GM12878 (cell line): ENCODE measurements at regions of chr1 and their contacts with region 1.

Region 1: GRCh38 chr1:90509225-90510048 is 207.7 kb downstream of the BARHL2 start:
- DNase-seq: peak; percentile 34
- ATAC-seq: peak; percentile 80
- H3K4me3 ChIP-seq: no peak overlapping the region
- H3K27ac ChIP-seq: no peak overlapping the region
- H3K4me1 ChIP-seq: no peaks in the 10 kb centered on the region
- H3K27me3 ChIP-seq: no peaks in the 10 kb centered on the region
- CTCF ChIP-seq: no peak
- EP300 ChIP-seq: peak; percentile 28 to 62; a peak in 2 of 4 replicates
- POLR2A ChIP-seq: no peak
- RAD21 ChIP-seq: no peak

Region 2: GRCh38 chr1:89771991-89772560 is 737.4 kb before region 1 on chr1:
- CTCF ChIA-PET with region 1: no interaction called
- POLR2A ChIA-PET with region 1: no interaction called
- RAD21 ChIA-PET with region 1: no interaction called
- SMC1A ChIA-PET with region 1: no interaction called
- in situ Hi-C with region 1: no loop called
- intact Hi-C with region 1: no loop called
- DNase-seq: no peak
- ATAC-seq: no peak
- H3K4me3 ChIP-seq: no peak overlapping the region
- H3K27ac ChIP-seq: no peak overlapping the region
- H3K4me1 ChIP-seq: no peaks in the 10 kb centered on the region
- H3K27me3 ChIP-seq: no peaks in the 10 kb centered on the region; a peak in 1 of 4 replicates
- CTCF ChIP-seq: no peak
- EP300 ChIP-seq: no peak
- POLR2A ChIP-seq: no peak
- RAD21 ChIP-seq: no peak

Region 3: GRCh38 chr1:90357995-90358394 is 151.4 kb before region 1 on chr1:
- CTCF ChIA-PET with region 1: no interaction called
- POLR2A ChIA-PET with region 1: no interaction called
- RAD21 ChIA-PET with region 1: interaction called, 10 read pairs
- SMC1A ChIA-PET with region 1: interaction called, 4 read pairs
- in situ Hi-C with region 1: no loop called
- intact Hi-C with region 1: loop called (anchors 5 kb)
- DNase-seq: peak; percentile 42
- ATAC-seq: peak; percentile 91
- H3K4me3 ChIP-seq: no peak overlapping the region
- H3K27ac ChIP-seq: no peak overlapping the region
- H3K4me1 ChIP-seq: no peaks in the 10 kb centered on the region; the same call in 1 of the 2 replicates
- H3K27me3 ChIP-seq: no peaks in the 10 kb centered on the region
- CTCF ChIP-seq: no peak
- EP300 ChIP-seq: peak; percentile 46 to 83; a peak in 3 of 4 replicates
- POLR2A ChIP-seq: no peak
- RAD21 ChIP-seq: no peak

Region 4: GRCh38 chr1:90488451-90488850 is 21.0 kb before region 1 on chr1:
- CTCF ChIA-PET with region 1: interaction called, 20 read pairs
- POLR2A ChIA-PET with region 1: interaction called, 22 read pairs
- RAD21 ChIA-PET with region 1: interaction called, 110 read pairs
- SMC1A ChIA-PET with region 1: interaction called, 78 read pairs
- in situ Hi-C with region 1: no loop called
- intact Hi-C with region 1: no loop called
- DNase-seq: no peak
- ATAC-seq: no peak
- H3K4me3 ChIP-seq: no peak overlapping the region
- H3K27ac ChIP-seq: no peak overlapping the region
- H3K4me1 ChIP-seq: no peaks in the 10 kb centered on the region
- H3K27me3 ChIP-seq: no peaks in the 10 kb centered on the region
- CTCF ChIP-seq: no peak
- EP300 ChIP-seq: no peak
- POLR2A ChIP-seq: no peak
- RAD21 ChIP-seq: no peak

Region 5: GRCh38 chr1:90526954-90527353 is 17.5 kb after region 1 on chr1:
- CTCF ChIA-PET with region 1: interaction called, 16 read pairs
- POLR2A ChIA-PET with region 1: interaction called, 54 read pairs
- RAD21 ChIA-PET with region 1: interaction called, 60 read pairs
- SMC1A ChIA-PET with region 1: interaction called, 111 read pairs
- in situ Hi-C with region 1: no loop called
- intact Hi-C with region 1: no loop called
- DNase-seq: no peak
- ATAC-seq: peak; percentile 57
- H3K4me3 ChIP-seq: no peak overlapping the region
- H3K27ac ChIP-seq: no peak overlapping the region
- H3K4me1 ChIP-seq: no peaks in the 10 kb centered on the region
- H3K27me3 ChIP-seq: no peaks in the 10 kb centered on the region
- CTCF ChIP-seq: no peak
- EP300 ChIP-seq: no peak
- POLR2A ChIP-seq: no peak
- RAD21 ChIP-seq: no peak

Region 6: GRCh38 chr1:90534663-90535295 is 25.3 kb after region 1 on chr1:
- CTCF ChIA-PET with region 1: interaction called, 17 read pairs
- POLR2A ChIA-PET with region 1: interaction called, 54 read pairs
- RAD21 ChIA-PET with region 1: interaction called, 60 read pairs
- SMC1A ChIA-PET with region 1: interaction called, 111 read pairs
- in situ Hi-C with region 1: no loop called
- intact Hi-C with region 1: loop called (anchors 1 kb)
- DNase-seq: no peak
- ATAC-seq: peak; percentile 64
- H3K4me3 ChIP-seq: no peak overlapping the region
- H3K27ac ChIP-seq: no peak overlapping the region
- H3K4me1 ChIP-seq: no peaks in the 10 kb centered on the region
- H3K27me3 ChIP-seq: peaks cover 0 to 3% of the 10 kb centered on the region in 2 experiments; a peak in 1 of 4 replicates
- CTCF ChIP-seq: no peak; a peak in 1 of 6 replicates
- EP300 ChIP-seq: 0 out of 4 replicates have a peak, but pooled peaks of 1 of the 2 experiments have one; percentile 28
- POLR2A ChIP-seq: no peak
- RAD21 ChIP-seq: no peak

Region 7: DNA sequence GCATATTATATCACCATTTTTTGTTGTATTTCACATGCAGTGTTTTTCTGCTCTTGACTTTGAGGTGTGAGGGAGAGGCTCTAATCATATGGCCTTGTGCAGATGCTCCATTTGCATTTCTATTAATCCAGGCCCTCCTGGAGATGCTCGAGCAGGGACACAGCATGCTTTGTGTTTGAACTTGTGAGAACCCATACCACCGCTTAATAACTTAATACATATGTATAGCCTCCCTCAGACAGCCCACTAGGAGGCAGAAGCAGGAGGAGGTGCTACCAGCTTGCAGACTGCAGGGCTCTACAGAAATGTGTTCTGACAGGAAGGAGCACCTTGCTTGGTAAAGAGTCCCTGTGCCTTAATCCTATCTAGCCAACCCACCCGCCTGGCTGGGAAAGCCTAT is 52.5 kb after region 1 on chr1:
- CTCF ChIA-PET with region 1: interaction called, 4 read pairs
- POLR2A ChIA-PET with region 1: interaction called, 3 read pairs
- RAD21 ChIA-PET with region 1: interaction called, 5 read pairs
- SMC1A ChIA-PET with region 1: interaction called, 28 read pairs
- in situ Hi-C with region 1: no loop called
- intact Hi-C with region 1: loop called (anchors 2 kb)
- DNase-seq: no peak
- ATAC-seq: peak; percentile 65
- H3K4me3 ChIP-seq: no peak overlapping the region
- H3K27ac ChIP-seq: no peak overlapping the region
- H3K4me1 ChIP-seq: no peaks in the 10 kb centered on the region
- H3K27me3 ChIP-seq: no peaks in the 10 kb centered on the region
- CTCF ChIP-seq: no peak
- EP300 ChIP-seq: no peak
- POLR2A ChIP-seq: no peak
- RAD21 ChIP-seq: no peak